ENCODE measurements at regions of chr10 and their contacts with region 1.

Region 1: GRCh38 chr10:93482145-93482834 is at the start of gene MYOF:
- DNase-seq: peak; percentile 80
- ATAC-seq: peak; percentile 88
- H3K4me3 ChIP-seq: peak within 1 kb of the TSS; percentile 43 to 92 (median 64)
- H3K4me3 Mint-ChIP-seq: peak within 1 kb of the TSS; percentile 83
- H3K27ac ChIP-seq: no peak within 1 kb of the TSS
- H3K27ac Mint-ChIP-seq: no peak within 1 kb of the TSS
- H3K4me1 ChIP-seq: peaks cover 12 to 14% of the 10 kb centered on the region in 2 donors
- H3K4me1 Mint-ChIP-seq: peaks cover 15% of the 10 kb centered on the region
- H3K27me3 ChIP-seq: peaks cover 0 to 16% (median 0%) of the 10 kb centered on the region in 4 experiments
- H3K27me3 Mint-ChIP-seq: peaks cover 26% of the 10 kb centered on the region
- CTCF ChIP-seq: peak; percentile 82
- total RNA-seq, gene MYOF: 0.07 and 0.24 TPM in 2 replicates

Region 2: GRCh38 chr10:93074147-93074596 is 408.1 kb before region 1 on chr10:
- CTCF ChIA-PET with region 1: no interaction called
- POLR2A ChIA-PET with region 1: no interaction called
- intact Hi-C with region 1: loop called (anchors 10 kb)
- DNase-seq: peak; percentile 64
- ATAC-seq: peak; percentile 35
- H3K4me3 ChIP-seq: peak overlapping the region in 4 of 5 experiments; percentile 15 to 55 (median 45)
- H3K4me3 Mint-ChIP-seq: peak overlapping the region; percentile 88
- H3K27ac ChIP-seq: no peak overlapping the region
- H3K27ac Mint-ChIP-seq: no peak overlapping the region
- H3K4me1 ChIP-seq: peaks cover 38 to 40% of the 10 kb centered on the region in 2 donors
- H3K4me1 Mint-ChIP-seq: peaks cover 38% of the 10 kb centered on the region
- H3K27me3 ChIP-seq: peaks cover 0 to 71% (median 39%) of the 10 kb centered on the region in 4 experiments
- H3K27me3 Mint-ChIP-seq: peaks cover 59% of the 10 kb centered on the region
- CTCF ChIP-seq: no peak

Region 3: GRCh38 chr10:93352638-93353383 is 129.5 kb before region 1 on chr10:
- CTCF ChIA-PET with region 1: interaction called, 19 read pairs
- POLR2A ChIA-PET with region 1: no interaction called
- intact Hi-C with region 1: no loop called
- DNase-seq: peak; percentile 57
- ATAC-seq: no peak
- H3K4me3 ChIP-seq: no peak overlapping the region
- H3K4me3 Mint-ChIP-seq: no peak overlapping the region
- H3K27ac ChIP-seq: no peak overlapping the region
- H3K27ac Mint-ChIP-seq: no peak overlapping the region
- H3K4me1 ChIP-seq: no peaks in the 10 kb centered on the region
- H3K4me1 Mint-ChIP-seq: no peaks in the 10 kb centered on the region
- H3K27me3 ChIP-seq: peaks cover 0 to 4% (median 0%) of the 10 kb centered on the region in 4 experiments
- H3K27me3 Mint-ChIP-seq: peaks cover 17% of the 10 kb centered on the region
- CTCF ChIP-seq: peak; percentile 84

Region 4: DNA sequence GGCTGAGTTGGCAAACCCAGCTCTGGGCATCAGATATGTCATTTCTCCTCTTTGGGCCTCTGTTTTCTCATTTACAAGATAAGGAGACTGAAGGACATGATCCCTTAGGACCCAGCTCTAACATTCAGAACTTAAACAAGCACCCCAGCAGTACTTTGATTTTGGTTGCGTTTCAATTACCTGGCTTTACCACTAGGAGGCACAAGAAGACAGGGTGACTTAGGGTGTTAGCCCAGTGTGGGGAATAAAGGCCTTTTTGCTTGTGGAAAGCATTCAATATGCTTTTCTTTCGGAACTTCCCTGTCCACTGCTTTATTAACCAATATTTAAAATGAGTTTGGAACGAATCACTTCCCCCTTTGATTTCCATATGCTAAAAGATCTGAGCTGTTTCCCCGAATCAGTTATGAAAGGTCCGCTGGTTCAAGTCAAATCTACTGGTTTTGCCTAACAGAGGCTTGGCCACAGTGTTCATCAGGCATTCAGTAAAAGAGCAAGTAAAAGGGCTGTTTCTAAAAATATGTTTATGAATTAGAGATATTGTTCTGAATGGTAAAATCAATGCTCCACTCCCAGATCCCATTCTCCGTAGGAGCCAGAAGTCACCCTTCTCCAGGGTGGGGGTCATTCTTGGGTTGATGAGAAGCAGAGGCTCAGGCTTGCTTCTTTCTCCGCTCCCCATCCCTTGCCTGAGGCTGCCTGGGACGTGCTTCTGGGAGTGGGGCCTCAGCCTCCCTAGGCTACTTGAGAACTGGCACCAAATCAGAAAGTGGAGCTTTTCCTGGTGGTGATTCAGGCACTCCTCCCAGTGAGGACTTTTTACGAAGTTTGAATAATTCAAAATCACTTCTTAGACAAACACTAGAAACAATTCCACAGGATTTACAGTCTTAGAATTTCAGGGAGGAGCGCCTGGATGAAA is 105.7 kb before region 1 on chr10:
- CTCF ChIA-PET with region 1: interaction called, 342 read pairs
- POLR2A ChIA-PET with region 1: no interaction called
- intact Hi-C with region 1: no loop called
- DNase-seq: peak; percentile 79
- ATAC-seq: peak; percentile 57
- H3K4me3 ChIP-seq: no peak overlapping the region
- H3K4me3 Mint-ChIP-seq: no peak overlapping the region
- H3K27ac ChIP-seq: no peak overlapping the region
- H3K27ac Mint-ChIP-seq: no peak overlapping the region
- H3K4me1 ChIP-seq: peaks cover 0 to 3% of the 10 kb centered on the region in 2 donors
- H3K4me1 Mint-ChIP-seq: peaks cover 2% of the 10 kb centered on the region
- H3K27me3 ChIP-seq: peaks cover 0 to 2% (median 0%) of the 10 kb centered on the region in 4 experiments
- H3K27me3 Mint-ChIP-seq: peaks cover 10% of the 10 kb centered on the region
- CTCF ChIP-seq: peak; percentile 98

Region 5: DNA sequence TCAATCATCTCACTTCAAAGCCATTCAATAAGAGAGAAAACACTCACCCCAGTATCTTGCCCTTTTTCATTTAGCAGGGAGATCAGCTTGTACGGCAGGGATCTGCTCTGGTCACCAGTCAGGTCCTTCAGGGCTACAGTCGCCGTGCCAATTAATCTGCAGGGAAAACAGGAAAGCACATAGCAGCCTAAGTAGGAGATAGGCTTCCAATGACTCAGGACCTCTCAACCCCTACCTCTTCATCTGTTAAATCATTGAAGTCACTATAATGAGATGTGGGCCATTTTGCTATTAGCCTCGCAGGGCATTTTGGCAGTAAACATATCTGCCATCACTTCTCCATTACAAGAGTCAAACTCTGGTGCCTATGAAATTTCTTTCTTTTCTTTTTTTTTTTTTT is 50.9 kb before region 1 on chr10:
- CTCF ChIA-PET with region 1: no interaction called
- POLR2A ChIA-PET with region 1: no interaction called
- intact Hi-C with region 1: no loop called
- DNase-seq: no peak
- ATAC-seq: no peak
- H3K4me3 ChIP-seq: no peak overlapping the region
- H3K4me3 Mint-ChIP-seq: no peak overlapping the region
- H3K27ac ChIP-seq: no peak overlapping the region
- H3K27ac Mint-ChIP-seq: no peak overlapping the region
- H3K4me1 ChIP-seq: peaks cover 11 to 20% of the 10 kb centered on the region in 2 donors
- H3K4me1 Mint-ChIP-seq: peaks cover 16% of the 10 kb centered on the region
- H3K27me3 ChIP-seq: no peaks in the 10 kb centered on the region
- H3K27me3 Mint-ChIP-seq: no peaks in the 10 kb centered on the region
- CTCF ChIP-seq: no peak

Region 6: GRCh38 chr10:93471110-93471651 is 11.1 kb before region 1 on chr10:
- CTCF ChIA-PET with region 1: interaction called, 14 read pairs
- POLR2A ChIA-PET with region 1: no interaction called
- intact Hi-C with region 1: no loop called
- DNase-seq: no peak
- ATAC-seq: no peak
- H3K4me3 ChIP-seq: no peak overlapping the region
- H3K4me3 Mint-ChIP-seq: no peak overlapping the region
- H3K27ac ChIP-seq: no peak overlapping the region
- H3K27ac Mint-ChIP-seq: no peak overlapping the region
- H3K4me1 ChIP-seq: no peaks in the 10 kb centered on the region
- H3K4me1 Mint-ChIP-seq: no peaks in the 10 kb centered on the region
- H3K27me3 ChIP-seq: no peaks in the 10 kb centered on the region
- H3K27me3 Mint-ChIP-seq: no peaks in the 10 kb centered on the region
- CTCF ChIP-seq: no peak

Region 7: GRCh38 chr10:93515071-93516005 is 33.0 kb after region 1 on chr10:
- CTCF ChIA-PET with region 1: interaction called, 11 read pairs
- POLR2A ChIA-PET with region 1: no interaction called
- intact Hi-C with region 1: no loop called
- DNase-seq: no peak
- ATAC-seq: no peak
- H3K4me3 ChIP-seq: no peak overlapping the region
- H3K4me3 Mint-ChIP-seq: no peak overlapping the region
- H3K27ac ChIP-seq: no peak overlapping the region
- H3K27ac Mint-ChIP-seq: no peak overlapping the region
- H3K4me1 ChIP-seq: peaks cover 0 to 3% of the 10 kb centered on the region in 2 donors
- H3K4me1 Mint-ChIP-seq: peaks cover 9% of the 10 kb centered on the region
- H3K27me3 ChIP-seq: no peaks in the 10 kb centered on the region
- H3K27me3 Mint-ChIP-seq: no peaks in the 10 kb centered on the region
- CTCF ChIP-seq: no peak